Colonic mucosa (tissue), 4 donors: ENCODE measurements at regions of chr11 and their contacts with region 1.

Region 1: DNA sequence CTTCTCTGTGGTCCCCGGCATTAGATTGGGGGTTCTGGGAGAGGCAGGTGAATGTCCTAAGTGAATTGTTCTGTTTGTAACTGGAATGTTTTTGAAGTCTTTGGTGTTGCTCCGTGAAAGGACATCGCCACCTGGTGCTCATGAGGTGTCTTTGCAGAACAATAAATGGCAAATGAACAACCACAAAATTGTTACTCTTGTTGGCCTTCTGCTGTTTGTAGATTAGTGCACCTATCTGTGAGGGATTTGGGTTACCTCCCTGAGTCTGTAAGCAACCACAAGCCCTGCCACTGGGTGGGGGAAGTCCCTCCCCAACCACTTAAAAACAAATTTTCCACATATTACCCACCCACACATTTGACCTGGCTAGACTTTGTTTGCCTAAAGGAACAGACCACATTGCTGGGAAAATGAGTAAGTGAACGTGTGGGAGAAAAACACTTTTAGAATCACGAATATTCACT is 4.7 kb downstream of the MPEG1 start:
- DNase-seq: no peak
- H3K4me3 ChIP-seq: no peak overlapping the region
- H3K27ac ChIP-seq: no peak overlapping the region
- H3K4me1 ChIP-seq: no peaks in the 10 kb centered on the region
- H3K27me3 ChIP-seq: no peaks in the 10 kb centered on the region
- CTCF ChIP-seq: peak; percentile 53

Region 2: GRCh38 chr11:59097113-59097708 is 110.8 kb before region 1 on chr11:
- intact Hi-C with region 1: no loop called
- DNase-seq: peak; percentile 77
- H3K4me3 ChIP-seq: no peak overlapping the region
- H3K27ac ChIP-seq: no peak overlapping the region
- H3K4me1 ChIP-seq: no peaks in the 10 kb centered on the region
- H3K27me3 ChIP-seq: no peaks in the 10 kb centered on the region
- CTCF ChIP-seq: peak; percentile 55

Region 3: GRCh38 chr11:59171508-59172322 is 36.3 kb before region 1 on chr11 and contains the start of gene DTX4:
- intact Hi-C with region 1: loop called (anchors 2 kb)
- DNase-seq: peak; percentile 97
- H3K4me3 ChIP-seq: peak within 1 kb of the TSS; percentile 61
- H3K27ac ChIP-seq: peak within 1 kb of the TSS; percentile 91
- H3K4me1 ChIP-seq: peaks cover 5% of the 10 kb centered on the region
- H3K27me3 ChIP-seq: no peaks in the 10 kb centered on the region
- CTCF ChIP-seq: peak; percentile 90
- total RNA-seq, gene DTX4: 54.7 to 59.7 TPM

Region 4: GRCh38 chr11:59273373-59273841 is 65.4 kb after region 1 on chr11:
- intact Hi-C with region 1: no loop called
- DNase-seq: peak; percentile 69
- H3K4me3 ChIP-seq: no peak overlapping the region
- H3K27ac ChIP-seq: peak overlapping the region; percentile 77
- H3K4me1 ChIP-seq: no peaks in the 10 kb centered on the region
- H3K27me3 ChIP-seq: no peaks in the 10 kb centered on the region
- CTCF ChIP-seq: no peak

Region 5: GRCh38 chr11:59429924-59430516 is 222.0 kb after region 1 on chr11:
- intact Hi-C with region 1: loop called (anchors 5 kb)
- DNase-seq: peak; percentile 49
- H3K4me3 ChIP-seq: no peak overlapping the region
- H3K27ac ChIP-seq: no peak overlapping the region
- H3K4me1 ChIP-seq: no peaks in the 10 kb centered on the region
- H3K27me3 ChIP-seq: no peaks in the 10 kb centered on the region
- CTCF ChIP-seq: peak; percentile 73